Activated T-helper 2 cell treated with anti-CD3 and anti-CD28 coated beads, Interferon-gamma antibody, Interleukin-2, Interleukin-4, amounts not matched to agents 10 μg/mL and 5 μg/mL and 100 μg/mL, durations not matched to agents 14 hours and 24 hours and 36 hours (primary cell): ENCODE measurements at regions of chr6 and their contacts with region 1.

Region 1: DNA sequence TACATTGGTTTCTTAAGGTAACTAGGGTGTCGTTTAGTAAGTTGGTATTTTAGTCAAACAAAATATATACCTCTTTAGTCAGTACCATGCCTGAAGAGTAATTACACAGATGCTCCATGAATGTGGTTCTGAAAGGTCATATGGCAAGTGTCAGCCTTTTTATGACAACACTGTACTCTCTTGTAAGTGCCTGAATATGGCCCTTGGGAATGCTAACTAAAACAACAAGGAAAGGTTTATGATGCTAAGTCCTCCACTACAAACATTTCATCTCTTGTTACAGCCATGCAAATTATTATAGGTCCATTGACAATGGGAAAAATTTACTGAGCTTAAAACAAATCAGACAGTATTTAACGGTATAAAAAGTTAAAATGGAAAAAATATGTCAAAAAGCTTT is 39.0 kb upstream of the SUPT3H start:
- DNase-seq: no peak
- H3K4me3 Mint-ChIP-seq: no peak overlapping the region
- H3K27ac Mint-ChIP-seq: peak overlapping the region; percentile 51
- H3K4me1 Mint-ChIP-seq: peaks cover 49% of the 10 kb centered on the region
- H3K27me3 Mint-ChIP-seq: no peaks in the 10 kb centered on the region

Region 2: GRCh38 chr6:45156075-45156474 is 260.6 kb before region 1 on chr6:
- intact Hi-C with region 1: loop called (anchors 2 kb)
- DNase-seq: peak; percentile 36
- H3K4me3 Mint-ChIP-seq: no peak overlapping the region
- H3K27ac Mint-ChIP-seq: peak overlapping the region; percentile 46
- H3K4me1 Mint-ChIP-seq: peaks cover 41% of the 10 kb centered on the region
- H3K27me3 Mint-ChIP-seq: no peaks in the 10 kb centered on the region